Endothelial cell of umbilical vein (primary cell): ENCODE measurements at regions of chr3 and their contacts with region 1.

Region 1: DNA sequence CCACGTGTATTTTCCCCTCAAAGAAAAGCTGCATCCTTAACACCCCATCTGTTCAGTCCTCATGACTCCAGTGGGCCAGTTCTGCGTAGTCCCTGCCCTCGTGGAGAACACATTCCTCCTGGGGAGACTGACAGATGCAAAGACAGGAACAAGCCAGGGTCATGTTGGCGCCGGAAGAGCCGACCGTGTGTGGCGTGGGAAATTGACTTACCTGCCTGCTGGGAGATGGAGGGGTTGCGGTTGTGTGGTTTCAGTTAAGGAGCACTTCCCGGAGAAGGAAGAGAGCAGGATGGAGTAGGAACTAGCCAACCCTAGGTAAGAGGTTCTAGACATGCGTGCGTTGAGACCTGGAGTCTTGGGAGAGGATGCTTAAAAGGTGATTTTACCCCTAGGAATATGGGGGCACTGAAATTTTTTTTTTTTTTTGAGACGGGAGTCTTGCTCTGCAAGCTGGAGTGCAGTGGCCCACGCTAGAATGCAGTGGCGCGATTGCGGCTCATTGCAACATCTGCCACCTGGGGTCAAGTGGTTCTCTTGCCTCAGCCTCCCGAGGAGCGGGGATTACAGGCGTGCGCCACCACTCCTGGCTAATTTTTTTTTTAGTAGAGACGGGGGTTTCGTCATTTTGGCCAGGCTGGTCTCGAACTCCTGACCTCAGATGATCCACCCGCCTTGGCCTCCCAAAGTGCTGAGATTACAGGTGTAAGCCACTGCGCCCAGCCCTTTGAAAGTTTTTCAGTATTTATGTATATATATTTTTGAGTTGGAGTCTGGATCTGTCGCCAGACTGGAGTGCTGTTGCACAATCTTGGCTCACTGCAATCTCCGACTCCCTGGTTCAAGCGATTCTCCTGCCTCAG is 1.4 kb downstream of the VHL start:
- DNase-seq: no peak
- H3K4me3 ChIP-seq: peak overlapping the region; percentile 52 to 74 (median 60)
- H3K27ac ChIP-seq: no peak overlapping the region
- H3K4me1 ChIP-seq: peaks cover 11% of the 10 kb centered on the region
- H3K27me3 ChIP-seq: no peaks in the 10 kb centered on the region
- CTCF ChIP-seq: no peak
- POLR2A ChIP-seq: no peak

Region 2: GRCh38 chr3:9769426-9770275 is 373.3 kb before region 1 on chr3 and contains the start of gene CAMK1:
- CTCF ChIA-PET with region 1: no interaction called
- POLR2A ChIA-PET with region 1: no interaction called
- dilution Hi-C with region 1: no loop called
- intact Hi-C with region 1: no loop called
- DNase-seq: peak; percentile 75
- H3K4me3 ChIP-seq: peak within 1 kb of the TSS; percentile 60 to 65 (median 62)
- H3K27ac ChIP-seq: peak within 1 kb of the TSS; percentile 27
- H3K4me1 ChIP-seq: peaks cover 18% of the 10 kb centered on the region
- H3K27me3 ChIP-seq: no peaks in the 10 kb centered on the region
- CTCF ChIP-seq: no peak
- POLR2A ChIP-seq: peak; percentile 79
- total RNA-seq, gene CAMK1: 23.5 and 25.7 TPM in 2 replicates

Region 3: DNA sequence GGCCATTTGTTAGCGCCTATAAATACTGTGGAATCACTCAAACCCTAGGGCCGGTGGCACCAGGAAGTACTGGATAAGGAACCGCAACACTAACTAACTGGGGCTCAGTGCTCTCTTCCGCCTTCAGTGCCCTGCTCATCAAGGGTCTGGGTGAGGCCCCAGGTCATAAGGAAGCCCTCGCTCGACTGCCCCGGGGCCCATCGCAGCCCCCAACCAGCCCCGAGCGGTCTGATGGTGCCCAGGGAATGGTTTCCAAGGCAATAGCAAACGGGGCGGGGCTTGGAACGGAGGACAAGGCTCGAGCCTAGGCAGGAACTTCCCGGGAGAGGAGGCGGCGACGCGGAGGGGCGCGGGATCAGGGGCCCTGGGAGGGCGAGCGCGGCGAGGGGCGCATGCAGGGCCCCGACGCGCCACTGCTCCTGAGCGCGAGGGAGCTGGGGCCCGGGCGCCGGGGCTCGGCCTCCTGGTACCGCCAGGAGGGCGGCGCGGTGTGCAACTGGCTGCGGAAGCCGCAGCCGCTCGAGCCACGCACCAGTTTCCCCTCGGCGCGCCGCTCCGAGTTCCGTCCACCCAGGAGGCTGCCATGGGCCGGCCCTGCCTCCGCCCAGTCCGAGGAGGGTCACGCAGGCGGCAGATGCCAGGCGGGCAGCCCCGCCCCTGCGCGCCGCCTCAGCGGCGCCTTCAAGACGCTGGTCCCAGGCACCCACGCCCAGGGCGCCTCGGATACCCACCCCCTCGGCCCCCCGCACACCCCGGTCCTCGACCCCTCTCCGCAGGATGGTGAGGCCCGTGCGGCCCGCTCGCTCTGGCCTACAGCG is 333.1 kb before region 1 on chr3 and contains the start of gene TTLL3:
- CTCF ChIA-PET with region 1: no interaction called
- POLR2A ChIA-PET with region 1: no interaction called
- dilution Hi-C with region 1: no loop called
- intact Hi-C with region 1: loop called (anchors 10 kb)
- DNase-seq: peak; percentile 53
- H3K4me3 ChIP-seq: peak within 1 kb of the TSS; percentile 52 to 64 (median 55)
- H3K27ac ChIP-seq: peak within 1 kb of the TSS; percentile 36
- H3K4me1 ChIP-seq: peaks cover 12% of the 10 kb centered on the region
- H3K27me3 ChIP-seq: no peaks in the 10 kb centered on the region
- CTCF ChIP-seq: peak in 1 of 2 donors; percentile 5
- POLR2A ChIP-seq: peak; percentile 72
- total RNA-seq, gene TTLL3: 41.8 and 43.5 TPM in 2 replicates

Region 4: DNA sequence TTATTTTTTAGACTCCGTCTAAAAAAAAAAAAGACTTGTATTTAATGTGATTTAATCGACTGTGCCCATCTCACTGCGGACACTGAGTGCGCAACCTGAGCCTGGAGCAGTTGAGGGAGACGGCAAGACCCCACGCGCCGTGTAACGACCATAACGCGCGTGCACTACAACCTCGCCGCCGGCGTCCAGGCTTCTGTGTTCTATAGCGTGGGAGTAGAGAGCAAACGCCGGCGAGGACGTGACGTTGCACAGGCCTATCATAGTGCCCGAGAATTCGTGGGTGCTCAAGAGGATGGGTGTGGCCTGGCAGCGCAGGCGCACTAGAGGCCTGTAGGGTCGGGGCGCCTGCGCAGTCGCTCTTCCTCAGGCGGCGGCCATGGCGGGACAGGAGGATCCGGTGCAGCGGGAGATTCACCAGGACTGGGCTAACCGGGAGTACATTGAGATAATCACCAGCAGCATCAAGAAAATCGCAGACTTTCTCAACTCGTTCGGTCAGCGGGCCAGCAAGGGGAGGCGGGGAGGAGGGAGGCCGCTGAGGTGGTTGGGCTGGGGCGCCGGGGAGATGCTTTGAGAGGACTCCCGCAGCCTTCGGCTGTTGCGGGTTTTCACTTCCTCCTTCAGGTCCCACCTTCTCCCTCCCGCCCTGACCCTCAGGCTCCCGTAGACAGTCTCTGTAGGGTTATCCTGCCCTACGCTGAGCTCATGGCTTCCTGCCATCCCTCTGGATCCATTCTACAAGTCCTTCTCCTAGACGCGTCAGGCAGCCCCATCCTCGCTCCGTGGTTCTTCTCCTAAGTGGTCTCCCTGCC is 27.4 kb before region 1 on chr3 and contains the start of gene BRK1:
- CTCF ChIA-PET with region 1: interaction called, 4 read pairs
- POLR2A ChIA-PET with region 1: no interaction called
- dilution Hi-C with region 1: no loop called
- intact Hi-C with region 1: loop called (anchors 1 kb)
- DNase-seq: peak; percentile 96
- H3K4me3 ChIP-seq: peak within 1 kb of the TSS; percentile 63 to 87 (median 68)
- H3K27ac ChIP-seq: peak within 1 kb of the TSS; percentile 63
- H3K4me1 ChIP-seq: peaks cover 9% of the 10 kb centered on the region
- H3K27me3 ChIP-seq: no peaks in the 10 kb centered on the region
- CTCF ChIP-seq: no peak
- POLR2A ChIP-seq: peak; percentile 98
- total RNA-seq, gene BRK1: 123 and 133 TPM in 2 replicates